B cell (primary cell): ENCODE measurements at regions of chr10 and their contacts with region 1.

Region 1: DNA sequence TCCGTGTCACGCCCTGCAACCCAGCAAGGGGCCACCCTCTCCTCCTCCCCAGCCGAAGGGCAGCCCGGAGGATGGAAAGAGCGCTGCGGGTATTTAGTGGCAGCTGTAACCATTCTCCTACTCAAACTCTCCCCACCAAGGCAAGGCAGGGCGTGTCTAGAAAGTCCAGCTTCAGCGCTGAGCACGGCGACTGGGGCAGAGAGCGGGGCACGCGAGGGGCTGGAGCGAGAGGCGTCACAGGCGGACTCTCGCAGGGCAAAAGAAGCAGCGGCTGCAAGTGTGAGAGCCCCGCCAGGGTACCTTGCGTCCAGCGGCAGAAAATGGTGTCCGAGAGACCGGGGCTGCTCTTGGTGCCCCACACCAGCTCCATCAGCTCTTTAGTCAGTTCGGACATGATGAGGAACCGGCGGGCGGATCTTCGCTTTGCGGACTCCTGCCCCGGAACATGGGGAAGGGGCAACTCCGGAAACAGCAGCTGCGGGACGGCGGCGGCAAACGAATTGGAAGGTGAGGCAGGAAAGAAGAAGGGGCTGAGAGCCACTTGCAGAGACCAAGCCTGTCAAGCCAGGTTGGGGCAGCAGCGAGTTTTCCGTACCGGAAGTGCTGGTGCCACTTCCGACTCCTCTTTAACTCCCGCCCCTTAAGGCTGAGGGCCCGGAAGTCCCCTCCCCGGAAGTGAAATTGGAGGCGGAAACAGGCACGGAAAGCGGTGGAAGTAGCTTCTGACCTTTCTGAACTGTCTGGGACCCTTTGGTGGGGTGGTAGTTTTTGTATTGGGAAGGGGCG is at the start of gene MINDY3:
- DNase-seq: peak; percentile 89
- ATAC-seq: peak; percentile 93
- H3K4me3 ChIP-seq: peak within 1 kb of the TSS; percentile 86 to 94 (median 92)
- H3K4me3 Mint-ChIP-seq: peak within 1 kb of the TSS; percentile 100
- H3K27ac ChIP-seq: peak within 1 kb of the TSS; percentile 76 to 85
- H3K27ac Mint-ChIP-seq: peak within 1 kb of the TSS; percentile 97
- H3K4me1 ChIP-seq: peaks cover 18 to 21% of the 10 kb centered on the region in 2 donors
- H3K4me1 Mint-ChIP-seq: peaks cover 38% of the 10 kb centered on the region
- H3K27me3 ChIP-seq: peaks cover 0 to 5% (median 2%) of the 10 kb centered on the region in 4 experiments
- H3K27me3 Mint-ChIP-seq: peaks cover 18% of the 10 kb centered on the region
- CTCF ChIP-seq: no peak
- total RNA-seq, gene MINDY3: 29.3 and 31.9 TPM in 2 replicates

Region 2: GRCh38 chr10:16436758-16437539 is 576.9 kb after region 1 on chr10 and contains the start of gene PTER:
- CTCF ChIA-PET with region 1: no interaction called
- POLR2A ChIA-PET with region 1: no interaction called
- intact Hi-C with region 1: loop called (anchors 1 kb)
- DNase-seq: peak; percentile 95
- ATAC-seq: peak; percentile 100
- H3K4me3 ChIP-seq: peak within 1 kb of the TSS; percentile 57 to 94 (median 84)
- H3K4me3 Mint-ChIP-seq: peak within 1 kb of the TSS; percentile 94
- H3K27ac ChIP-seq: peak within 1 kb of the TSS; percentile 65 to 69
- H3K27ac Mint-ChIP-seq: peak within 1 kb of the TSS; percentile 91
- H3K4me1 ChIP-seq: peaks cover 20 to 26% of the 10 kb centered on the region in 2 donors
- H3K4me1 Mint-ChIP-seq: peaks cover 45% of the 10 kb centered on the region
- H3K27me3 ChIP-seq: no peaks in the 10 kb centered on the region
- H3K27me3 Mint-ChIP-seq: peaks cover 7% of the 10 kb centered on the region
- CTCF ChIP-seq: no peak
- total RNA-seq, gene PTER: 17.5 and 18.6 TPM in 2 replicates